ENCODE measurements at regions of chr13 and their contacts with region 1.

Region 1: GRCh38 chr13:26186118-26186870 is 35.8 kb downstream of the RNF6 start:
- DNase-seq: peak; percentile 90 to 94 (median 92)
- ATAC-seq: peak; percentile 99
- H3K4me3 ChIP-seq: peak overlapping the region; percentile 46 to 55
- H3K27ac ChIP-seq: peak overlapping the region; percentile 80 to 86
- H3K4me1 ChIP-seq: peaks cover 0 to 16% of the 10 kb centered on the region in 2 donors
- H3K27me3 ChIP-seq: no peaks in the 10 kb centered on the region
- CTCF ChIP-seq: peak in 1 of 2 donors; percentile 45

Region 2: GRCh38 chr13:25910991-25911419 is 275.3 kb before region 1 on chr13:
- intact Hi-C with region 1: no loop called
- DNase-seq: no peak
- ATAC-seq: no peak
- H3K4me3 ChIP-seq: no peak overlapping the region
- H3K27ac ChIP-seq: no peak overlapping the region
- H3K4me1 ChIP-seq: no peaks in the 10 kb centered on the region
- H3K27me3 ChIP-seq: no peaks in the 10 kb centered on the region
- CTCF ChIP-seq: no peak

Region 3: DNA sequence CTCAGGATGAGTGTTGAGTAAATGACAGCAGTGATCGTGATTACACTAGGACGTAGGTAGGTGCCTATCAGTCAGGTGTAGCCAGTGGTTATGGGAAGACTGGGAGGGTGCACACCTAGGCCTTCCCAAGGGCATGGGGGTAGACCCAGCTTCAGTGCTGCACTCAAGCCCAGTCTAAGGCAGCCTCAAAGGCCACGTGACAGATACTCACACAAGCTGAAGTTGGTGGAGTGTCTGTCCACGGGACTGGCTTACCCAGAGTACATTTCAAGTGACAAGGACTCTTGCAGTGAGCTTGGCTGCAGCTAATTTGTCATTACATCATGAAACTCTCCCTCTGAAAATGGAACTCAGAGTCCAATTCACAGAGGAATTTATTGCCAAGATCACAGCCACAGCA is 252.8 kb before region 1 on chr13:
- intact Hi-C with region 1: no loop called
- DNase-seq: no peak
- ATAC-seq: peak; percentile 86
- H3K4me3 ChIP-seq: no peak overlapping the region
- H3K27ac ChIP-seq: no peak overlapping the region
- H3K4me1 ChIP-seq: no peaks in the 10 kb centered on the region
- H3K27me3 ChIP-seq: no peaks in the 10 kb centered on the region
- CTCF ChIP-seq: no peak

Region 4: GRCh38 chr13:26280295-26280694 is 94.0 kb after region 1 on chr13:
- intact Hi-C with region 1: no loop called
- DNase-seq: no peak
- ATAC-seq: no peak
- H3K4me3 ChIP-seq: no peak overlapping the region
- H3K27ac ChIP-seq: no peak overlapping the region
- H3K4me1 ChIP-seq: no peaks in the 10 kb centered on the region
- H3K27me3 ChIP-seq: no peaks in the 10 kb centered on the region
- CTCF ChIP-seq: no peak

Region 5: GRCh38 chr13:26498656-26499591 is 312.6 kb after region 1 on chr13:
- intact Hi-C with region 1: loop called in 1 of 2 experiments (anchors 10 kb)
- DNase-seq: no peak
- ATAC-seq: no peak
- H3K4me3 ChIP-seq: no peak overlapping the region
- H3K27ac ChIP-seq: no peak overlapping the region
- H3K4me1 ChIP-seq: no peaks in the 10 kb centered on the region
- H3K27me3 ChIP-seq: peaks cover 0 to 3% of the 10 kb centered on the region in 2 donors
- CTCF ChIP-seq: no peak